ENCODE measurements at regions of chr6 and their contacts with region 1.

Region 1: DNA sequence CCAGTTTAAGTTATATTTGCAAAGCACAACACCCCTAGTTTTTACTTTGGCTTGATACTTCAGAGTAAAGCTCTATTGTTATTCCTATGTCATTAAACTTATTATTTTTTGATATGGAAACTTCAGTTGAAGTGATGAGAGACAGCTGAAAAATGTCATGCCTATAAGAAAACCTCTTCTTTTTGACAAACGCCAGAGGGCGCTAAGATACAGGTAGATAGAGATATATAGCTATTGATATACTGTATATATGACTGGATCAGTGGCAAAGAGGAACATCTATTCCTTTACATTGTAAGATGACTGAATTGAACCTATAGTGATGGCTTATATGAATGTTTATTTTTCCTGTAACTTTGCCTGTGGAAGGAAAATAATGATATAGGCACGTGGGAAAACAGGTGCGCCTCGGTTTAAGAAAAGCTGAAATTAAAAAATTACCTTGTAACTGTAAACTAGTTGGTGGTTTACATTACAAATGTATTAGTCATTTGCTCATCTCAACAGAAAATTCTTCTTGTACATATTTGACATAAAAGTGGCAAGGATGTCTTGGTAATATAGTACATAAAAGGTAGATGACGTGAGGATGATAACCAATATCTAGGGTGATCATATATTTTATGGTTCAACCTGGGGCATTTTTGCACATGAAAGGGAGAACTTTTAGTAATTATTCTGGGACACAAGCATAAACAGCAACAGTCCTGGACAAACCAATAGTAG is 74.1 kb downstream of the LAMA4 start:
- DNase-seq: peak in 9 of 14 experiments; percentile 3 to 83 (median 39)
- ATAC-seq: peak; percentile 52
- H3K4me3 ChIP-seq: no peak overlapping the region
- H3K4me3 Mint-ChIP-seq: no peak overlapping the region
- H3K27ac ChIP-seq: no peak overlapping the region
- H3K27ac Mint-ChIP-seq: no peak overlapping the region
- H3K4me1 ChIP-seq: no peaks in the 10 kb centered on the region
- H3K4me1 Mint-ChIP-seq: no peaks in the 10 kb centered on the region
- H3K27me3 ChIP-seq: peaks cover 10 to 13% of the 10 kb centered on the region in 2 experiments
- H3K27me3 Mint-ChIP-seq: peaks cover 31% of the 10 kb centered on the region
- CTCF ChIP-seq: peak; percentile 80

Region 2: DNA sequence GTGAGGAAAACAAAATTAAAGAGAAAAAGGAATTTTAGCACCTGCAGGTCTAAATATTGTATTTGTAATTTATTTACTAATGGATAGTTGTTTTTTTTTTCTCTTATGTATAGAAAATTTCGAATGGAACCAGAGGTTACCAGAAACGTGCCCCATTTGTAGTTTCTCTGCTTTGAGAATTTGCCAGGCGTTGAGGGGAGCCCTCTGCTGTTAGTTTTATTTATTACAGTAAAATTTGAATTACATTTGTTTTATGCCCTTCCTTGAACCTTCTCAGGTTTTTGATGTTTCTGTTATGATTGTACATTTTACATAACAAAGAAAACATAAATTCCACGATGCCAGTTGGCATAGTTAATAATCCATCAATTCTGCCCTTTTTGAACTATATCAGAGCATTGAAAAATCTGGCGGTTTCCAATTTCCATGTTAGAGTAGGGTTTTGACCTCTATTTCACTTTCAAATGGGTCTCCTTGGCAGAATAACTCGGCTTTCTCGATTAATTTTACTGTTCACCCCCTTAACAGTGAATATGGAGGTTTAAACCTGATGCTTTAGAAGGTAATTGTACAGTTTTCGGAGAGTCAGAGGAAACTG is 131.8 kb after region 1 on chr6:
- CTCF ChIA-PET with region 1: interaction called, 11 read pairs
- POLR2A ChIA-PET with region 1: no interaction called
- intact Hi-C with region 1: loop called (anchors 1 kb)
- DNase-seq: peak in 3 of 14 experiments; percentile 32 to 38 (median 38)
- ATAC-seq: peak; percentile 34
- H3K4me3 ChIP-seq: no peak overlapping the region
- H3K4me3 Mint-ChIP-seq: no peak overlapping the region
- H3K27ac ChIP-seq: no peak overlapping the region
- H3K27ac Mint-ChIP-seq: no peak overlapping the region
- H3K4me1 ChIP-seq: no peaks in the 10 kb centered on the region
- H3K4me1 Mint-ChIP-seq: no peaks in the 10 kb centered on the region
- H3K27me3 ChIP-seq: peaks cover 0 to 7% of the 10 kb centered on the region in 2 experiments
- H3K27me3 Mint-ChIP-seq: peaks cover 23% of the 10 kb centered on the region
- CTCF ChIP-seq: peak; percentile 58

Region 3: DNA sequence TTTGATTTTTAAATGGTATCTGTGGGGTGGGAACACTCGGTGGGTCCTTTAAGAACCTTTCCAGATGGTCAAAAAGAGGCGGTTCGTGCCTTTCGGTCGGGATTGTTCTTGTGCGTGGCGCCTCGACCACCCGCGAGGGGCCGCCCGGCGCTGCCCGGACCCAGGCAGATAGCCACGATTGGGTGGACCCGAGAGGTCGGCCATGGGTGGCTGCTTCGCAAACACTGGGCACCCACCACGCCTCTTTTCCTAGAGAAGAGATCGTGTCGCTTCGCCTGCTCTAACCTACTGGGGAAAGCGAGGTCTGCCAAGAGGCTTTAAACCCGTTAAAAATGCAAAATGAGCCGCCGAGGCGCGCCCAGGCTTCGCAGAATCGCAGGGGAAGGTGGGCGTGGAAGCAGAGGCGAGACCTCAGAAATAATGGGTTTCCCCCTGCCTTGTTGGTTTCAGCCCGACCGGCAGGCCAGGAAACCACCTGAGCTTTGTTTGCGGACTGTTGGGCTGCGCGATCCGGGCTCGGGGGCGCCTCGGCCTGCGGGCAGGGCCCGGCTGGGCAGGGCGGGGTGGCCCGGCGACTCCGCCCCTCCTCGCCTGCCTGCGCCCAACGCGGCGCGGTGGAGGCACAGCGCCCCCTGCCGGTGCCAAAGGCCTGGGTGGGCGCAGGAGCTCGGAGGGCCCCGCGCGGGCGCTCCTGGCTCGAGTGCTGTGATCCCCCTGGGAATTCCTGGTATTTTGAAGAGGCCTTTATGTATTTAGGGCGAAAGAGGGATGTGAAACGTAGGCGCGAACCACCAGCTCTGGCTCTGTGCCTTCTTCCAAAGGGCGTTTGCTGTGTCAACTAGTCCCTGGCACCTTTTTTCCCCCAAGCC is 1678.5 kb after region 1 on chr6:
- CTCF ChIA-PET with region 1: interaction called, 4 read pairs
- POLR2A ChIA-PET with region 1: no interaction called
- intact Hi-C with region 1: loop called (anchors 1 to 5 kb)
- DNase-seq: peak; percentile 27 to 88 (median 54)
- ATAC-seq: peak; percentile 74
- H3K4me3 ChIP-seq: peak overlapping the region; percentile 50
- H3K4me3 Mint-ChIP-seq: peak overlapping the region; percentile 82
- H3K27ac ChIP-seq: no peak overlapping the region
- H3K27ac Mint-ChIP-seq: no peak overlapping the region
- H3K4me1 ChIP-seq: peaks cover 49% of the 10 kb centered on the region
- H3K4me1 Mint-ChIP-seq: peaks cover 5% of the 10 kb centered on the region
- H3K27me3 ChIP-seq: peaks cover 50 to 57% of the 10 kb centered on the region in 2 experiments
- H3K27me3 Mint-ChIP-seq: peaks cover 42% of the 10 kb centered on the region
- CTCF ChIP-seq: peak; percentile 71

Region 4: GRCh38 chr6:113879186-113880096 is 1699.2 kb after region 1 on chr6:
- CTCF ChIA-PET with region 1: interaction called, 3 read pairs
- POLR2A ChIA-PET with region 1: no interaction called
- intact Hi-C with region 1: loop called in 1 of 2 experiments (anchors 1 kb)
- DNase-seq: peak in 2 of 14 experiments; percentile 45 to 46
- ATAC-seq: peak; percentile 62
- H3K4me3 ChIP-seq: no peak overlapping the region
- H3K4me3 Mint-ChIP-seq: no peak overlapping the region
- H3K27ac ChIP-seq: no peak overlapping the region
- H3K27ac Mint-ChIP-seq: no peak overlapping the region
- H3K4me1 ChIP-seq: no peaks in the 10 kb centered on the region
- H3K4me1 Mint-ChIP-seq: no peaks in the 10 kb centered on the region
- H3K27me3 ChIP-seq: peaks cover 0 to 3% of the 10 kb centered on the region in 2 experiments
- H3K27me3 Mint-ChIP-seq: peaks cover 48% of the 10 kb centered on the region
- CTCF ChIP-seq: peak; percentile 22

Region 5: DNA sequence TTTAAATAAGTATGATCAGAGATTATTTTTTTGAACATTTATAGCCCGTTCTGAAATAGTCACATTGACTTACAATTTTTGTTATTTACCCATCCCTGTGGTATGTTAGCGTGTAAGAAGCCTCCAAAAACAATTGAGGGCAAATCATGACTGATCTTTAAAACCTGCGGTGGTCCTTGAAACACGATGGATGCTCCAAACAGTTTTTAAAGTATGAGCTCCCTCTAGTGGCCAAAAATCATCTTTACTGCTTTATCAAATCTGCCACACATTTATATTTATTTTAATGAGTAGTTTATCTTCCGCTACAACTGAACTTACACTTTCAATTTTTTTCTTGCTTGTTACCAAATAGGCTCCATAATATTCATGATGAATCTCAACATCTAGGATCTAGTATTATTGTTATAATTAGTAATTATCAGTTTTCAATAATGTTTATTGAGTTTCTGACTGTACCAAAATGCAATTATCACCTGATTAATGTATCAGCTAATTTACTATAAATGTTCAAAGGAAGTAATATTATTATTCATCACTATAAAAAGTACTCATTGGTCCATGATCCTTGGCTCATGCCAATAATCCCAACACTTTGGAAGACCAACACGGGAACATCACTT is 1729.1 kb after region 1 on chr6:
- CTCF ChIA-PET with region 1: interaction called, 6 read pairs
- POLR2A ChIA-PET with region 1: no interaction called
- intact Hi-C with region 1: loop called (anchors 1 to 2 kb)
- DNase-seq: peak in 4 of 14 experiments; percentile 7 to 67 (median 54)
- ATAC-seq: no peak
- H3K4me3 ChIP-seq: no peak overlapping the region
- H3K4me3 Mint-ChIP-seq: no peak overlapping the region
- H3K27ac ChIP-seq: no peak overlapping the region
- H3K27ac Mint-ChIP-seq: no peak overlapping the region
- H3K4me1 ChIP-seq: no peaks in the 10 kb centered on the region
- H3K4me1 Mint-ChIP-seq: peaks cover 4% of the 10 kb centered on the region
- H3K27me3 ChIP-seq: no peaks in the 10 kb centered on the region
- H3K27me3 Mint-ChIP-seq: peaks cover 11% of the 10 kb centered on the region
- CTCF ChIP-seq: peak; percentile 84

Region 6: GRCh38 chr6:113936093-113936934 is 1756.1 kb after region 1 on chr6:
- CTCF ChIA-PET with region 1: no interaction called
- POLR2A ChIA-PET with region 1: no interaction called
- intact Hi-C with region 1: loop called in 1 of 2 experiments (anchors 1 kb)
- DNase-seq: peak in 3 of 14 experiments; percentile 39 to 63 (median 59)
- ATAC-seq: peak; percentile 71
- H3K4me3 ChIP-seq: no peak overlapping the region
- H3K4me3 Mint-ChIP-seq: no peak overlapping the region
- H3K27ac ChIP-seq: no peak overlapping the region
- H3K27ac Mint-ChIP-seq: no peak overlapping the region
- H3K4me1 ChIP-seq: no peaks in the 10 kb centered on the region
- H3K4me1 Mint-ChIP-seq: no peaks in the 10 kb centered on the region
- H3K27me3 ChIP-seq: no peaks in the 10 kb centered on the region
- H3K27me3 Mint-ChIP-seq: no peaks in the 10 kb centered on the region
- CTCF ChIP-seq: peak; percentile 95